Activated CD4-positive, alpha-beta memory T cell treated with anti-CD3 and anti-CD28 coated beads, Interleukin-2, amount 10 ng/mL, durations not matched to agents 7 days and 5 days (primary cell): ENCODE measurements at regions of chrX and their contacts with region 1.

Region 1: GRCh38 chrX:24464836-24465531 is at the start of gene PDK3:
- DNase-seq: peak; percentile 86
- H3K4me3 Mint-ChIP-seq: peak within 1 kb of the TSS; percentile 79
- H3K27ac Mint-ChIP-seq: peak within 1 kb of the TSS; percentile 83
- H3K4me1 Mint-ChIP-seq: peaks cover 35% of the 10 kb centered on the region
- H3K27me3 Mint-ChIP-seq: no peaks in the 10 kb centered on the region
- total RNA-seq, gene PDK3: 28.0 to 29.0 TPM

Region 2: DNA sequence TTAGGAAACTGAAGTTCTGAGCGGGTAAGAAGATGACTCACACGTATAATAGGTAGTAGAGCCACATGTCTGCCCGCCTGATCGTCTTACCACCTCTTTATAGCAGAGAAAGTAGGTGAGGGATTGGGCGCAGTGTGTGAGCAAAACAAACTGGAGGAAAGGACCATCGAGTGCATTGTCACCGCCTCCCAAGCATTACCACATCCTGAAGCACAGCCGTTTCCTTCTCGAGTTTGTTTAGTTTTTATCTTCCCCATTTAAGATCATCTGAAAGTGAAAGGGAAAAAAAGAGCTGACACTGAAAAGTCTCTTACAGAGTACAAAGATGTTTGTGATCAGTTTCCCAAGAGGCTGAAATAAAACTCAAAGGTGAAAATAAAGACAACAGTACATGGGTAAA is 14.9 kb after region 1 on chrX:
- CTCF ChIA-PET with region 1: interaction called, 19 read pairs
- POLR2A ChIA-PET with region 1: interaction called, 99 read pairs
- DNase-seq: peak; percentile 83
- H3K4me3 Mint-ChIP-seq: peak overlapping the region; percentile 70
- H3K27ac Mint-ChIP-seq: peak overlapping the region; percentile 98
- H3K4me1 Mint-ChIP-seq: peaks cover 68% of the 10 kb centered on the region
- H3K27me3 Mint-ChIP-seq: no peaks in the 10 kb centered on the region